ENCODE measurements at regions of chr2 and their contacts with region 1.

Region 1: DNA sequence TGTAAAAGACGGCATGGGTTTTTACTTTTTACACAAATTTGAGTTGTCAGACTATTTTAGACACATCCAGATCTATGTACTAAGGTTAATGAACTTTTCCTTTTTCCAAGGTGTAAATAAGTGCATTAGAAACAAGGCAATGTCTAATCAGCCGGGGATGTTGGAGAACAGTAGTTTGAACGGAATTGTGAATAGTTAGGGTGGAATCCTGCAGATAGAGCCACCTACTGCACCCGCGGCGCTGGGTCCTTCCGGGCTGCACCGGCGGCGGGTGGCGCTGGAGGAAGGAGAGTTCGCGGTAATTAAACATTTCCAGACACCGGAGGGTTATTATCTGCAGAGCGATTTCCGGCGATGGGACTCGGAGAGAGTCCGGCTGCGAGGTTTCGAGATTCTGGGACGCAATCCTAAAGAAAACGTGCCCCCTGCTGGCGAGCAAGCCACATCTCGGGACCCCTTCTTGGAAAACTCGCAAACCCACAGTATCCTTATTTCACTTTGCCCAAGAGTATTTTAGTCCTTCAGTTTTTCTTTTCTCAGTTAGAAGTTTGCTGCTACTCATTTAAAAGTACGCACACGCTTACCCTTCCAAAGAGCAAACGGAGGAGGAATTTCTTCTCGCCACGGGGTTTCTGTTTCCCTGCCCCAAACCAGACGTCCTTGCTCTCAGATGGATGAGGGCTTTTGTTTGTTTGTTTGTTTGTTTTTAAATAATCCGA is 4.5 kb upstream of the OSR1 start:
- DNase-seq: peak; percentile 73 to 83
- ATAC-seq: peak; percentile 28 to 78 (median 57)
- H3K4me3 ChIP-seq: peak overlapping the region; percentile 52 to 77 (median 65)
- H3K27ac ChIP-seq: peak overlapping the region in 7 of 10 donors; percentile 11 to 65 (median 46)
- H3K4me1 ChIP-seq: peaks cover 0 to 34% (median 26%) of the 10 kb centered on the region in 9 donors
- H3K27me3 ChIP-seq: peaks cover 0 to 75% (median 19%) of the 10 kb centered on the region in 7 donors
- CTCF ChIP-seq: peak; percentile 65 to 90 (median 79)

Region 2: DNA sequence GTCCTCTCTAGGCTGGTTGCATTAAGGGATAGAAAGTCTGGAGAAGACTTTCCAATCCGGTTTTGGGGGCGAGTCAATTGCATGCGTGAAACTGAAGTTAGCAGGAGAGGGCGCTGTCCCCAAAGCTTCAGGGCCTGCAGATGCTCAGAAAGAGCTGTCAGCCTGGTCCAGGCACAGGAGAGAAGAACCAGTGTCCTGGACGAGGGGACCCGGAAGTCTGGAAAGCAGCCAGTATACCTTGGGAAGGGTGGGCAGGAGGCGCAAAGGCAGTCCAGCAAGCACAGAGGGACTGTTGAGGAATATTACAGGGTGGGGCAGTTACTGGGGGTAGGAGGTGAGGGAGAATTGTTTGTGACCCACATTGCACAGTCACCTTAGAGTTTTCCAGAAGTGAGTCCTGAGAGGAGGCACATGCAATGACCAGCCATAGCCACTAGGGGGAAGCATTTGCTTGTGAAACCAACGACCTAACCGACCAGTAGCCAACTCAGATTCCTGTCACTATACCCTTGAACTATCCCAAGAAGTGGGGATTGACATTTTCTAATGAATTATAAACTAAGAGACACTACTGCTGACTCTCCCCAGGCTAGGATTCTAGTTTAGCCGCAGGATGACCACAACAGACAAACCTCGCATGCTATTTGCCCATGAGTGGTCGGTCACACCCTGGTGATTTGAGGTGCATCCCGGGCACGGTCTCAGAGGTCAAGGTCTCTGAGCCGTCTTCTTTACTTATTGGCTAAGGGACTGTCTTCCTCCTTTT is 975.3 kb before region 1 on chr2:
- intact Hi-C with region 1: loop called in 1 of 10 experiments (anchors 10 kb)
- DNase-seq: peak; percentile 51 to 70
- ATAC-seq: peak; percentile 83 to 94 (median 92)
- H3K4me3 ChIP-seq: no peak overlapping the region
- H3K27ac ChIP-seq: peak overlapping the region in 5 of 10 donors; percentile 3 to 56 (median 29)
- H3K4me1 ChIP-seq: peaks cover 0 to 7% (median 0%) of the 10 kb centered on the region in 9 donors
- H3K27me3 ChIP-seq: peaks cover 0 to 3% (median 0%) of the 10 kb centered on the region in 7 donors
- CTCF ChIP-seq: peak; percentile 81 to 96 (median 92)

Region 3: GRCh38 chr2:18520451-18521425 is 842.2 kb before region 1 on chr2:
- intact Hi-C with region 1: loop called in 8 of 10 experiments (anchors 1 to 10 kb)
- DNase-seq: peak; percentile 86 to 88
- ATAC-seq: peak; percentile 84 to 92 (median 86)
- H3K4me3 ChIP-seq: peak overlapping the region in 6 of 10 donors; percentile 0 to 37 (median 8)
- H3K27ac ChIP-seq: peak overlapping the region in 9 of 10 donors; percentile 37 to 79 (median 64)
- H3K4me1 ChIP-seq: peaks cover 8 to 47% (median 26%) of the 10 kb centered on the region in 9 donors
- H3K27me3 ChIP-seq: no peaks in the 10 kb centered on the region
- CTCF ChIP-seq: peak; percentile 82 to 94 (median 90)

Region 4: DNA sequence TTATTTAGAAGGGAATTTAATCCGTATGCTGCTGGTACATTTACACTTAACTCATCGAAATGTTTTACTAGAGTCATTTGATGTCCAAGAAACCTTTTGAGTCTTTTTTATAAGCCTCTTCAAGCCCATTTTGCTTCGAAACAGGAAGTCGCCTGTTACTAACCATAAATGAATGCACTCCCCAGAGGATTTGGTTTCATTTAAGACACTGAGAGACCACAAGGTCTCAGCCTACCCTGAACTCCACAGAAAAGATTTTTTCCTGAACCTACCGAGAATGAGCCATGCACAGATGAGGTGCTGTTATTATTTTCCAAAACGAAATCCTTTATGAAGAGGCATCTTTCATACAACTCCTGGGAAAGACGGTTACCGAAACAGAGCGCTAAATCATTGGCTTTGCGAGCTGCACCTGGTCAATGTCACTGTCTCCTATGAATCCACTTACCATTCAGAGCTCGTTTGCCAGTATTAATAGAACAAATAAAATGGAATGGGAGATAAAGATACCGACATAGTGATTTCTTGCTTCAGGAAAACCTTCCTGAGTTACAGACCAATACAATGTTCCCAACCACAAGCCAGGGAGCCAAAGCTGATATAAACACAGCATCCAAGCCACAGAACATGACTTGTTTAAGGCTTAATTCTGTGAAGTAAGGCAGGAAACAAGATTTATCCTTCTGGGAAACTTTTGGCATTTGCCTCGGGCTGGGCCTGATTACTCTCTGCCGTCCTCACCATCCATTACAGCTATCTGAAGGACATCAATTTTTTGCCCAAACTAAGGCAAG is 386.5 kb before region 1 on chr2:
- intact Hi-C with region 1: loop called in 3 of 10 experiments (anchors 5 to 10 kb)
- DNase-seq: no peak
- ATAC-seq: peak; percentile 44 to 78 (median 70)
- H3K4me3 ChIP-seq: peak overlapping the region in 6 of 10 donors; percentile 5 to 38 (median 32)
- H3K27ac ChIP-seq: peak overlapping the region; percentile 26 to 84 (median 64)
- H3K4me1 ChIP-seq: peaks cover 0 to 36% (median 18%) of the 10 kb centered on the region in 9 donors
- H3K27me3 ChIP-seq: no peaks in the 10 kb centered on the region
- CTCF ChIP-seq: no peak

Region 5: DNA sequence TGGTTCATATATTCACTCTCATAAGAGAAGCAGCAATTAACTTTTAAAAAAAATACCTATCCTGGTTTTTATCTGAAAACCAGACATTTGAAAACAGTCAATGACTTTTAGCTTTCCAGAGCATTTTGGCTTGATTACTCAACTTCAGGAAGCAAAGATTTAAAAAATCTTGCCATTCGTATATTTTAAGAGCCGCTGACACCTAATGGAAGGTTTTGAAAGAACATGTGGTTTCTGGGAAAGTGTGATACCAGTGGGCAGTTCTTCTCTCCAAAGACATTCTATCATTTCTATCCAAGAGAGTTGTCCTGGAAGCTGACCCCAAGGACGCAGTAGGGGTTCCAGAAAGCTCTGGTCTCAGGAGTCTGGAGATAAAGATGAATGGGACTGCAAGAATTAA is 304.2 kb after region 1 on chr2:
- intact Hi-C with region 1: loop called in 4 of 10 experiments (anchors 5 to 10 kb)
- DNase-seq: no peak
- ATAC-seq: peak in 1 of 8 donors; percentile 12
- H3K4me3 ChIP-seq: no peak overlapping the region
- H3K27ac ChIP-seq: no peak overlapping the region
- H3K4me1 ChIP-seq: peaks cover 0 to 8% (median 0%) of the 10 kb centered on the region in 9 donors
- H3K27me3 ChIP-seq: no peaks in the 10 kb centered on the region
- CTCF ChIP-seq: peak in 4 of 9 donors; percentile 15 to 43 (median 34)

Measured in heart right ventricle (tissue), 16 donors.